Activated CD4-positive, alpha-beta T cell treated with anti-CD3 and anti-CD28 coated beads, Interleukin-2, amount 10 ng/mL, durations not matched to agents 24 days and 14 days (primary cell): ENCODE measurements at regions of chr12 and their contacts with region 1.

Region 1: DNA sequence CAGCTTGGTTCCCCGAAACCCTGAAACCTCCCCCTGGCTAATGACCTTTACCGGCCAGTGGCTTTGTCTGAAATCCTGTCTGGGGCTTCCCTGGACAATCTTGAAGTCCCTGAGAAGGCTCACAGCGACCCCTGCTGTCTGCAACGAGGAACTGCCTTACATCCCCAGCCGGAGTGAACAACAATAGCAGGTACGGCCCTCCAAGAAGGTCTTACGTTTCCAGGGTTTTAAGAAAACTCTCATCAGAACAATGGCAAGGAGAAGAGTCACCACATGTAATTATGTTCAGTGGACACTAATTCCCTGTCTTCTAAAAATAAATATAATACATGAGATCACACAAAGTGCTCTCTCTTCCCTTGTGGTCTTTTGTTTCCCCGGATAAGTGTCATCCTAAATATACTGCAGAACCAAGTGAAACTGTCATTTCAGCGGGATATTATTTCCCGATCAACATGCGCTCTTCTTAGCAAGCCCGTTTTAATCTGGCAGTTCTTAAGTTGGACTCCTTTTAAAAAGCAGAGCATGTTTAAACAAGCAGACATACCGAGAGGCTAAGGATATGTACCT is 53.3 kb downstream of the RBM19 start:
- DNase-seq: peak; percentile 84
- H3K4me3 Mint-ChIP-seq: no peak overlapping the region
- H3K27ac Mint-ChIP-seq: no peak overlapping the region
- H3K4me1 Mint-ChIP-seq: no peaks in the 10 kb centered on the region
- H3K27me3 Mint-ChIP-seq: no peaks in the 10 kb centered on the region

Region 2: DNA sequence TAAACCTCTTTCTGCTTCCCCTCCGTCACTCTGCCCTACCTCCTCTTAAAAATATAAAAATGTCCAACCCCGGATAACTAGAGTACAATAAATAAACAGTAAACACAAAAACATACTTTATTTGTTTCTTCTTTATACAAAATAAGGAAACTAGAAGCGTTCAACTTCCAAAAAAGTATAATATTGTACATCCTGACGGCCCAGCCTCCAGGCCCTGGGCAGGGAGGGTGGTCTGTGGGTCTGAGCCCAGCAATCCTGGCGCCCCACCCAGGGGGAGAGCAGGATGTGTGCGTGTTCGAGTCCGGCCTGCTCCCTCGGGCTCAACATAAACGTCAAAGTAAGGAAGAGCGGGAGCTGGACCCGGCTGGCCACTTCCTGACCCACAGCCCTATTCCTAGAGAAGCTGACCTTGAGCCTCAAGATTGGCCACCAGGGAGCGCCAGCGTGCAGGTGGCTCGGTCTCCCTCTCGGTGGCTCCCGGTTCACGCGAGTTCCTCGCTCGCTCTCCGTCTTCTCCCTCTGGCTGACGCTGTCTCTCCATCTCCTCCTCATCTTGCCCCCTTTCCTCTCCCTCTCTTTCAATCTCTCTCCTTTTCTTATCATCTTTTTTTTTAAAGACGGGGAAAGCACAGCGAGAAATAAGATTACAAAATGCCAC is 450.6 kb before region 1 on chr12:
- intact Hi-C with region 1: loop called (anchors 5 kb)
- DNase-seq: peak; percentile 90
- H3K4me3 Mint-ChIP-seq: peak overlapping the region; percentile 48
- H3K27ac Mint-ChIP-seq: peak overlapping the region; percentile 64
- H3K4me1 Mint-ChIP-seq: peaks cover 15% of the 10 kb centered on the region
- H3K27me3 Mint-ChIP-seq: peaks cover 62% of the 10 kb centered on the region

Region 3: DNA sequence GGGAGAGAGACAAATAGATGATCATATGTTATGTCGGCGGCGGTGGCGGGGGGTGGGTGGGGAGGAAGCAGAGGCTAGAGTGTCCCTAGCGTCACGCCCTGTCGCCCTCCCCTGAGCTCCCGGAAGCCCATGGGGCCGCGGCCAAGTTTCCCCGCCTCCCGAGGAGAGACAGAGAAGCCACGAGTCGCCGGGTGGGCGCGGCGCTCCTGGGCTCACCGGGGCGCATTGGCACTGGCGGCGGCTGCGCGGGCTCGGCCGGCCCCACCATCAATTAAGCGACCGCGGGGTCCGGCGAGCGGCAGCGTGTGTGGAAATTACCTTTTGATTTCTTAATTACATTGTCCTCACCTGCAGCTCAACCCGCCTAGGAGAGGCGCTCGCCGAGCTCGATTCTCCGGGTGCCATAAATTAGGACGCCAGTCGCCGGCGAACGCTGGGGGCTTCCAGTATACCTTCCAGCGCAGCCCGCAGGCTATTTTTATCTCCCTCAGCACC is 321.3 kb before region 1 on chr12:
- intact Hi-C with region 1: no loop called
- DNase-seq: peak; percentile 55
- H3K4me3 Mint-ChIP-seq: peak overlapping the region; percentile 46
- H3K27ac Mint-ChIP-seq: no peak overlapping the region
- H3K4me1 Mint-ChIP-seq: no peaks in the 10 kb centered on the region
- H3K27me3 Mint-ChIP-seq: peaks cover 14% of the 10 kb centered on the region

Region 4: DNA sequence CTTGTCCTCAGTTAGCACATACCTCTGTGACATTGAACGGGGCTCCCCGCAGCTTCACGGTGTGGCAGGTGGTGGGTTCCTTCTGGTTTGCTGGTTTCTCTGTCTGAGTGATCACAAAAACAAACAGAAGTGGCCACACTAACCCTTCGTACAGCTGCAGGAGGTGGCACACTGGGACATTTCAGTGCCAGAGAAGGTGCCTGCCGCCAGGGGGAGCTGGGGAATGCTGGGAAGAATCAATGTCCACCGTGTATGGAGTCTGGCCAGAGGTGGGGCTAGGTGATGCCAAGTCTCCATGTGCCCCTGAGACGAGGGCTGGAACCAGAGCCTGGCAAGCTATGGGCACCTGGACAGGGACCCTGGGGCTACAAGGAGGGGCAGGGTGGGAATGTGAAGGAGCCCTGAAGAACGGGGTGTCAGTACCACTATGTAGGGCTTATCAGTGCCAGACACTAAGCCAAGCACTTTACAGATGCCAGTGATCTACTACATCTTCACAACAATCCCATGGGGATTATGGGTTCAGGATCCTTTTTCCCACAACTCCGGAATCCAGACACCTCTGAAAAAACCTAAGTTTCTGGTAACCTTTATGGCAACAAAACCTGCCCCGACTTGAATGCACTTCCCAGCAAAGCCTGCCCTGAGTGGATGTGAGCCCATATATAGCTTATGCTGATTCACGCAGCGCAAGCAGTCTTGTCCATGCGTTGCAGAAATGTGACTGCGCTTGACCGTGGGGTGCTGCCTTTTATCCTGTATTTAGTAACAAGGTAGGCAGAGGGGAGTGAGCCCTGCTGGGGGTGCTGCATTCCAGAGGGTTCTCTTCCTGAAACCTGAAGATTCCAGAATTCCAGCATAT is 42.5 kb after region 1 on chr12:
- intact Hi-C with region 1: no loop called
- DNase-seq: no peak
- H3K4me3 Mint-ChIP-seq: no peak overlapping the region
- H3K27ac Mint-ChIP-seq: no peak overlapping the region
- H3K4me1 Mint-ChIP-seq: no peaks in the 10 kb centered on the region
- H3K27me3 Mint-ChIP-seq: no peaks in the 10 kb centered on the region

Region 5: GRCh38 chr12:114166362-114166761 is 253.5 kb after region 1 on chr12:
- intact Hi-C with region 1: no loop called
- DNase-seq: no peak
- H3K4me3 Mint-ChIP-seq: no peak overlapping the region
- H3K27ac Mint-ChIP-seq: no peak overlapping the region
- H3K4me1 Mint-ChIP-seq: no peaks in the 10 kb centered on the region
- H3K27me3 Mint-ChIP-seq: no peaks in the 10 kb centered on the region